ENCODE measurements at regions of chr11 and their contacts with region 1.

Region 1: DNA sequence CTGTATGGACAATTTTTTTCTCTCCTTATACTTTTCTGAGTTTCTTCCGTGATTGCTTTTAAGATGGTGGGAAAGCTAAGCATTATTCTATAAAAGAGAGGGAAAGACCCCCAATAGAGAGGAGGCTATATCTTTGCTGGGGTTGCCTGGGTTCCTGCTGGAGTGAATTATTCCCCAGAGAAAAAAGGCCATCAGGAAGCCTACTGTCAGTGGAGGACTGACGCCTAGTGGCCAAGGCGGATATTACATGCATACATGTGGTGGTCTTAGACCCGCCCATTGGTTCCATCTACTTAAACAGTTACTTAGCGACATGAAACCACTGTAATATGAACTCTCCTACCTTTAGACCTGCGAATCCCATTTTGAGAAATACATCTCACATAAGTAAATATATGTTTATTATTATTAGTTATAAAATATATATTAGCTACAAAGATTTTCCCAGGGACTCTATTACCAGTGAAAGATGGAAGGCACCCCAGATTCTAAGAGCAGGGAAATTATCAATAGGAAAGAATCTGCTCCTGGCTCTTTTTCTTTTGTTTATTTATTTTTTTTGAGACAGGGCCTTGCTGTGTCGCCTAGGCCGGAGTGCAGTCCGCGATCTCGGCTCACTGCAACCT is 15.7 kb upstream of the PGA3 start:
- DNase-seq: peak; percentile 84
- ATAC-seq: peak; percentile 95
- H3K4me3 Mint-ChIP-seq: no peak overlapping the region
- H3K27ac Mint-ChIP-seq: no peak overlapping the region
- H3K4me1 Mint-ChIP-seq: peaks cover 2% of the 10 kb centered on the region
- H3K27me3 Mint-ChIP-seq: peaks cover 10% of the 10 kb centered on the region

Region 2: GRCh38 chr11:60899046-60899936 is 288.3 kb before region 1 on chr11:
- CTCF ChIA-PET with region 1: no interaction called
- DNase-seq: no peak
- ATAC-seq: peak; percentile 76
- H3K4me3 Mint-ChIP-seq: no peak overlapping the region
- H3K27ac Mint-ChIP-seq: peak overlapping the region; percentile 33
- H3K4me1 Mint-ChIP-seq: peaks cover 13% of the 10 kb centered on the region
- H3K27me3 Mint-ChIP-seq: no peaks in the 10 kb centered on the region

Region 3: DNA sequence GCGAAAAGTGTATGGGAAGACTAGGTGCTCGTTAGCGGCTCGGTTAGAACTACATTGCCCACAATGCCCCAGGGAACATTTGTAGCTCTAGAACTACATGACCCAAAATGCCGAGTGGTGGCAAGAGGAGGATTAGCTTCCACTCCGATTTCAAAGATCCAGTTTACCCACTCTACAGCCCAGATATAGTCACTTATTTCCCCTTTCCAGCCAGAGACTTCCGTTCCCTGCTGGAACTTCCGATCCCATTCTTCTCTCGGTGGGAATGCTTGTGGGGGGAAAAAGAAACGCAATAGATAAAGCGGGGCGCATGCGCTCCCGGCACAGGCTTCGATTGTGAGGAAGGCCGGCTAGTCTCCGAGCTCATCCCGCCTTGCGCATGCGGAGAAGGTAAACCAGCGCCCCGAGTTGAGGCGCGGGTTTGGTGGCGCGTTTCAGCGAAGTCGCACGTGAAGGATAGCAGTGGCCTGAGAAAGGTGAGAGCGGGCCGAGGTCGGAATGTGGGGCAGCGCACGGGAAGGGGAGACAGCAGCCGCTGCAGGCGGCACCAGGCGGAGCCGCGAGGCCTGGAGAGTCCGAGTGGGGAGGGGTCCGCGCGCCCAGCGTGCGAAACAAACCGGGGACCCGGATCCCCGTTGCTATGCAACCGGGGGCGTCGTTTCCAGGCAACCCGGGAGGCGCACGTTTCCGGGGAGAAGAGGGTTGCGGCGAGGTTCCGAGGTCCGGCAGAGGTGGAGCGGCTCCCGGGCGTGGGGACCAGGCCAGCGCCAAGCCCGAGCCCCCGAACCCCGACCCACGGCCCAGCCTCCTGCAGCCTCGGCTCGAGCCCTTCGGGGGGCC is 273.6 kb before region 1 on chr11 and contains the start of gene TMEM109:
- CTCF ChIA-PET with region 1: interaction called, 12 read pairs
- DNase-seq: peak; percentile 93
- ATAC-seq: peak; percentile 77
- H3K4me3 Mint-ChIP-seq: peak within 1 kb of the TSS; percentile 94
- H3K27ac Mint-ChIP-seq: peak within 1 kb of the TSS; percentile 98
- H3K4me1 Mint-ChIP-seq: peaks cover 36% of the 10 kb centered on the region
- H3K27me3 Mint-ChIP-seq: peaks cover 11% of the 10 kb centered on the region
- total RNA-seq, gene TMEM109: 106 to 121 TPM

Region 4: DNA sequence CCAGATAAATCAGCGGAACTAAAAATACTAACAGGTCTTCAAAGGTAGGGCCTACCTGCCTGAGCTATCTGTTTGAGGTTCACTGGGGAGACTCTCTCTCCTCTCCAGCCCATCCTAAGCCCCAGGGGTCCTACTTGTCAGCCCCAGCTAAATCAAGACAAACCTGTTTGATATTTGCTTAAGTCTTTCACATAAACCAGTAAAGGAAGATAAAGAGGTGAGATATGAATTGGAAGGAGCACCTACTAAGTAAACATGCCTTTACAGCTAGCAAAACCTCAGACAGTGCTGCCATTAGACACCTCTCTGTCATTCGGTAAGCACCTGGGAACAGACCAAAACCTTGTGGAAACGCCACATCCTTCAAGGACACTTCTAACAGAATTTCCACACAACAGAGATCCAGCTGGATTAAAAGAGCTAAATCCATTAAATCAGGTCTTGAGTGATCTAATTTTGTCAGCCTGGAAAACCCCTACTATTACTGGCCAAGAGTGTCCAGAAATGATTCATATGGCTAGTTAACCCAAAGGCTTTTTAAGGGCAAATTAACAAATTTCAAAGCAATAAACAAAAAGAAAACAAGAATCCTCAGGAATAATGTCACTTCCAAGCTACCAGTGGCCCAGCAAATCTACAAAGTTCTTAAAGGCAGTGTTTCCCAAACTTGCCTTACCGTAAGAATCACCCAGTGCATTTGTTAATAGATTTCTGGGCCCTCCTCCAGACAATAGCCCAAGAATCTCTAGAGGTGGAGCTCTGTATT is 28.8 kb before region 1 on chr11:
- CTCF ChIA-PET with region 1: interaction called, 14 read pairs
- DNase-seq: no peak
- ATAC-seq: no peak
- H3K4me3 Mint-ChIP-seq: no peak overlapping the region
- H3K27ac Mint-ChIP-seq: no peak overlapping the region
- H3K4me1 Mint-ChIP-seq: peaks cover 41% of the 10 kb centered on the region
- H3K27me3 Mint-ChIP-seq: no peaks in the 10 kb centered on the region

Region 5: DNA sequence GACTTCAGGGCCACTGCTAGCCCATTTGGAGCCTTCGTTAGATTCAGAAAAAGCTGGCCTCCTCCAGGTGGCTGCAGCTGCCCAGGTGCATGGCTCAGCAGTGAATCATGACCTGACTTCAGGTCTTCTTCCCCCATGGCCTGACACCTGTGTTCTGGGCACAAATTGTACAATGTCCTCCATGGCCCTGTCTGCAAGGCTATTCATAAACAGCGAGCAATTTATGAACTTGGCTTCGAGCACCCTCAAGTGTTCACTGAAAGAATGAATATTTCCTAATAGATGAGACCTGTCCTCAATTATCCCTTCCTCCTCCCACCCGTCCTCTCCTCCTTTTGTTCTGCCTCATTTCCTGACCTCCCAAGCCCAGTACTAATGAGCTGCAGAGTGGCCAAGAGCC is 14.2 kb before region 1 on chr11:
- CTCF ChIA-PET with region 1: interaction called, 16 read pairs
- DNase-seq: no peak
- ATAC-seq: no peak
- H3K4me3 Mint-ChIP-seq: no peak overlapping the region
- H3K27ac Mint-ChIP-seq: no peak overlapping the region
- H3K4me1 Mint-ChIP-seq: peaks cover 11% of the 10 kb centered on the region
- H3K27me3 Mint-ChIP-seq: peaks cover 14% of the 10 kb centered on the region

Region 6: DNA sequence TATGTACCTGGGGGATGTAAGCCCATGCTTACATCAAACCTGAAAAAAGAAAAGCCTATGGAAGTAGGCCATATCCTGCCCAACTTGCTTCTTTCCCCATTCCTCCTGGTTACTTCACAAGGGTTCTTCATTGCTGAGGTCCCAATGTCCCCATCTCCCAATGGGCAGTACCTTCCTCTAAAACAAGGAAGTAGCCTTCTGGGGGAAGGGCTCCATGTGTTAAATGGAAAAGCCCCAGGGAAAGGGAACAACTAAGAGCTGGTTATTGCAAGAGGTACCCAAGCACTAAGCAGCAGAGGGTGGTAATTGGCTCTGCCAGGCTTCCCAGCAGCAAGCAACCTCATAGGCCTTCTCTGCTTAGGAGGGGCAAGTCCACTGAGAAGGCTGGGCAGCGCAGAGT is 216.0 kb after region 1 on chr11:
- CTCF ChIA-PET with region 1: no interaction called
- DNase-seq: no peak
- ATAC-seq: no peak
- H3K4me3 Mint-ChIP-seq: no peak overlapping the region
- H3K27ac Mint-ChIP-seq: no peak overlapping the region
- H3K4me1 Mint-ChIP-seq: no peaks in the 10 kb centered on the region
- H3K27me3 Mint-ChIP-seq: no peaks in the 10 kb centered on the region